Posterior vena cava (tissue), 2 donors: ENCODE measurements at regions of chr3 and their contacts with region 1.

Region 1: GRCh38 chr3:25468866-25469319 is 40.8 kb downstream of the RARB start:
- DNase-seq: peak; percentile 89

Region 2: DNA sequence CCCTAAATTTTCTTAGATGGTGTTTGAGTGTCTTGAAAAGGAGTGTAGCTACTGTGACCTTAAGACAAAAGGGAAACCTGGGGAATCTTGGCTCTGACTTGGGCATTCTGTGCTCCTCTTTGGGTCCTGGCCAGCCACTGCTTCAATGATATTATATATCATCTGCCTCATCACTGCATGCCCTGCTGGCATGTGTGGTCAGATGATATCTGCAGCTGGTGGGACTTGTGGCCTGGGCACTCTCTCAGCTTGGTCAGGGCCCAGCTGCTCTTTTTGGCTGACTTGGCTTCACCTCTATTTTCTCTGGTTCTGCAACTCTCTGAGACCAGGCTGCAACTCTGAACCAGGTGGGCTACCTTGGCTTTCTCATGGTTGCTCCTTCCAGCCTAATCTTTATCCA is 487.0 kb before region 1 on chr3:
- intact Hi-C with region 1: no loop called
- DNase-seq: no peak

Region 3: GRCh38 chr3:25566358-25566920 is 97.5 kb after region 1 on chr3:
- intact Hi-C with region 1: loop called in 1 of 2 experiments (anchors 10 kb)
- DNase-seq: no peak